MCF 10A (cell line): ENCODE measurements at regions of chr1 and their contacts with region 1.

Region 1: DNA sequence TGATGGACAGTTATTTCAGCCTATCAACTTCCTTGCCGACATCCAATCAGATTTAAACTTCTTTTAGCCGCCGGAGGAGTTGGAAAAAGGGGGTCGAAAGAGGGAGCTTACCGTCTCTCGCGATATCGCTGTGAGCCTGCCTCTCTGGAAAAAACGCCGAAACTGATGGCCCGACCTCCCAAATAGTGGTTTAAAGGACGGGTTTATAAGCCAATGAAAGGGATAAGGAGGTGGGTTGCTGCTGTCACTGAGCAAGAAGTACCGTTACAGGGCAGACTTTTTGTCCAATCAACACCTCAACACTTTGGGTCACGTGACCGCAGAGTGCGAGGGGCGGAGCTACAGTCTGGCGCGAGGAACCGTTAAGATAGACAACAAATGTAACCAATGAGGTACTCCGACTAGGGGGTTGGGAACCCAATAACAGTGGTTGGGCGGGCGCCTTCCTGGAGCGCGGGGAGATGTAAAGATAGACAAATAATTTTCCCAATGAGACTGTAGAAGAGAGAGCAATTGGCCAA is at the start of gene RBM15:
- DNase-seq: peak; percentile 100
- H3K4me3 Mint-ChIP-seq: no peak within 1 kb of the TSS
- H3K27ac Mint-ChIP-seq: no peak within 1 kb of the TSS
- H3K4me1 Mint-ChIP-seq: peaks cover 39% of the 10 kb centered on the region
- H3K27me3 Mint-ChIP-seq: no peaks in the 10 kb centered on the region
- CTCF ChIP-seq: no peak
- total RNA-seq, gene RBM15: 31.4 and 35.9 TPM in 2 replicates

Region 2: DNA sequence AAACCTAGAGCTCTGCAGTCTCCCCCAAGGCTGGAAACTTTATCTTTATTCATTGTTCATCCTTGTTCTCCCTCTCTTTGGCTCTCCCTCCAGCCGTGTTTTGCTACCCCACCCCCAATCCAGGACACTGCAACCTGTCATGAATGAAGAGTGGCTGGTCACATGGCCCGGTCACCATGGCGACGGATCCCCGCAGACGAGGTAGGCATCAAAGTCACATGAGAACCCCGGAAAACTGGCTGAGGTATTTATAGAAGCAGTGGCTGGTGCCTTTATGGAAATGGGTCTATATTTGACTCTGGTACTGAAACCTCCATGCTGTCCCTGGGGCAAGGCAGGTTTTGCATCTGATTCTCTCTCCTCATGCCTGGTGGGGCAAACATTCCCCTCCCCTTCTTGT is 202.0 kb before region 1 on chr1:
- CTCF ChIA-PET with region 1: no interaction called
- POLR2A ChIA-PET with region 1: no interaction called
- intact Hi-C with region 1: no loop called
- DNase-seq: no peak
- H3K4me3 Mint-ChIP-seq: no peak overlapping the region
- H3K27ac Mint-ChIP-seq: no peak overlapping the region
- H3K4me1 Mint-ChIP-seq: no peaks in the 10 kb centered on the region
- H3K27me3 Mint-ChIP-seq: peaks cover 74% of the 10 kb centered on the region
- CTCF ChIP-seq: no peak

Region 3: DNA sequence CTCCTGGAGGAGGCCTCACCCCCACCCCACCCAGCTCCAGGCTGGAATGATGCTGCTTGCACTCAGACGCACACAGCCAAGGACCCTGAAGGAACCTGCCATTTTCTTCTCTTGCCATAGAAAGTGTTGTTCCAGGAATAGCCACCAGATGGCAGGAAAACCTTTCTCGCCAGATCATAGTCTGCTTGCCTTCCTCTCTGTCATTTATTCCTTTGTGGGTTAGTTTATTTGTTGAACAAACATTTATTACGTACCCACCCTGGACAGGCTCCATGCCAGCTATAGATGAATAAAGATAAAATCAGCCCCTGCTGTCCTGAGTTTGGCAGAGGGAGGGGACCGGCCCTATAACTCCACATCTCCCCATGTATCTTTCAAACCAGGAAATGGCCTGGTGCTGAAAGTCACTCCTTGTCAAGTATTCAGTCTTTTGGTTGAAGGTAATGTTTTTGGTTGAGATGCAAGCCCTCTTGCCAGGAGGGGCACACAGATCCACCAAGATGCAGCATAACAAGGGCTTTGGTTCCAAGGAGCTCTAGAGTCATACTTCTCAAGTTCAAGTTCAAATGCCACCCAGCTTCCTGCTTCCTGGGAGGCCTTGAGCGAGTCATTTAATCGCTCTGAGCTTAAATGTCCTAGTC is 135.8 kb before region 1 on chr1:
- CTCF ChIA-PET with region 1: interaction called, 46 read pairs
- POLR2A ChIA-PET with region 1: interaction called, 10 read pairs
- intact Hi-C with region 1: no loop called
- DNase-seq: peak; percentile 71
- H3K4me3 Mint-ChIP-seq: no peak overlapping the region
- H3K27ac Mint-ChIP-seq: no peak overlapping the region
- H3K4me1 Mint-ChIP-seq: no peaks in the 10 kb centered on the region
- H3K27me3 Mint-ChIP-seq: no peaks in the 10 kb centered on the region
- CTCF ChIP-seq: peak; percentile 67

Region 4: GRCh38 chr1:110328274-110328673 is 10.7 kb before region 1 on chr1:
- CTCF ChIA-PET with region 1: interaction called, 8 read pairs
- POLR2A ChIA-PET with region 1: interaction called, 21 read pairs
- intact Hi-C with region 1: no loop called
- DNase-seq: no peak
- H3K4me3 Mint-ChIP-seq: no peak overlapping the region
- H3K27ac Mint-ChIP-seq: no peak overlapping the region
- H3K4me1 Mint-ChIP-seq: no peaks in the 10 kb centered on the region
- H3K27me3 Mint-ChIP-seq: no peaks in the 10 kb centered on the region
- CTCF ChIP-seq: no peak

Region 5: DNA sequence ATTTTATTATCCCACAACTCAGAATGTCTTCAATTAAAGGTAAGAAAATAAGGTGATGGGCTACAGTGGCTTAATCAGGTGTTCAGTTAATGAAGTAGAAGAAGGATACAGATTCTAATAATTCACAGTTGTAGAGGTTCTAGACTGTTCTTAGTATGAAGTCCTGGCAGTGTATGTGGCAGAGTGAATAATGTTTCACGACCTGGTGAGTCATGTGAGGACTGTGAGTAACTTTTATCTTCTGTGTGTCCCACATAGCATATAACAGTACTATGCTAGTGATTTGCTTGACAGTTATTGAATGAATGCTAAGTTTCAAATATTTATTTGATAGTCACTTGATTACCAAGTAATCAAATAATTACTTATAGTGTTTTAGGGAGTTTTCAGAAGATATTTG is 31.9 kb after region 1 on chr1:
- CTCF ChIA-PET with region 1: interaction called, 7 read pairs
- POLR2A ChIA-PET with region 1: interaction called, 21 read pairs
- intact Hi-C with region 1: no loop called
- DNase-seq: peak; percentile 54
- H3K4me3 Mint-ChIP-seq: no peak overlapping the region
- H3K27ac Mint-ChIP-seq: peak overlapping the region; percentile 40
- H3K4me1 Mint-ChIP-seq: peaks cover 11% of the 10 kb centered on the region
- H3K27me3 Mint-ChIP-seq: no peaks in the 10 kb centered on the region
- CTCF ChIP-seq: no peak

Region 6: DNA sequence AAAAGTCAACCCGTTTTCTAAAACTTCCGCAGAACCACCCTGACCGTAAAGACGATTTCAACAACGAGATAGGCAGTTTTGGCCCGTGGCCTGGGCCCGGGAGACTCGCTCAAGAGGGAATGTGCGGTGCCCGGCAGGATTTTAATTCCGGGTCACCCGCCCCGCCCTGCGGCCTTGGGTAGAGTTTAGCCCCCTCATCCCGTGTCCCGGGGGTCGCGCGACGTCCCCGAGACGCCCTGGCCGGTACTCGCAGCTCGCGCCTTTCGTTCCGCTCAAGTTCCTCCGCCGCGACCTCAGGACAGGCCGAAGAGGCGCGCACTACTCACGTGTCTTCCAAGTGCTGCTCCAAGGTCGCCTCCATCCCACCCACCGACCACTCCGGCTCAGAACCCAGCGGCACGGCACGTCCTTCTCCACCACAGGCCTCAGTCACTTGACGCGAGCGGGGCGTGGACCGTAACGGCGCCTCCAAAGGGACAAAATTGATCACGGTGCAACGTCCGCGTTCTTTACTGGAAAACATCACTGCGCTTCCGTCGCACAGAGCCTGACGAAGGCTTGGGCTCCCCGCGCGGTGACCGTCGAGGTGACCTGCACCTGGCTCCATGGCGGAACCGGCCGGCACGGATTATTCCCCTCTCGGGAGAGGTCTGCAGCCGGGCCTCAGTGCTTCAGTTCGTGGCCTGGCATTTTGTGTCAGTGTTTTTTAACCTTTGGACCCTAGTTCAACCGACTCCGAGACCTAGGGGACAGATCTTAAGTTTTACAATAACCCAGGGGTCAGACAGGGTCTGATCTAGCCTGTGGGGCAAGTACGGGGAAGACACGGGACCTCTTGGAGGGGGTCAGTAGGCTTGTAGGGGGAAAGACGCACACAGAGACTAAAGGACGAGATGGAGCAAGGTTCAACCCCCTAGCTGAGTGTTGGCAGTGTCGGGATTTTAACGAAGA is 68.6 kb after region 1 on chr1 and contains the start of gene LAMTOR5:
- CTCF ChIA-PET with region 1: interaction called, 7 read pairs
- POLR2A ChIA-PET with region 1: interaction called, 114 read pairs
- intact Hi-C with region 1: loop called (anchors 1 kb)
- DNase-seq: peak; percentile 90
- H3K4me3 Mint-ChIP-seq: peak within 1 kb of the TSS; percentile 100
- H3K27ac Mint-ChIP-seq: peak within 1 kb of the TSS; percentile 100
- H3K4me1 Mint-ChIP-seq: peaks cover 9% of the 10 kb centered on the region
- H3K27me3 Mint-ChIP-seq: no peaks in the 10 kb centered on the region
- CTCF ChIP-seq: no peak
- total RNA-seq, gene LAMTOR5: 111 and 127 TPM in 2 replicates

Region 7: DNA sequence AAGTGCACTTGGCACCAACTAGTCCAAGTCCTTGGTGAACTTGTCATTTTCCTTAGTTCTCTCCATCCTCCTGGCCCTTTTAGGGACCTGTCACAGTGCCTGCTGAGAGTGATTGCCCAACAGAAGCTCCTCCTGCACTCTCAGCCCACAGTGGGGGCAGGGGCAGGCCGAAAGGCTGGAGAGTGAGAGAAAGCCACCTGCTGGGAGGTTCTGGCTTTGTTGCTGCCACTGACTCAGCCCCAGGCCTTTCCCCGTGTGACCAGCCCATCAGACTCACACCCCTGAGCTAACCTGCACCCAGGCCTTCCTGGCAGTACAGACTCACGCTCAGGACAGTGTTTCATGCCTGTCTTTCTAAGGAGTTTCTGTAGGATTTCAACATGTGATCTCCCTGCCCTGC is 94.9 kb after region 1 on chr1:
- CTCF ChIA-PET with region 1: interaction called, 6 read pairs
- POLR2A ChIA-PET with region 1: interaction called, 20 read pairs
- intact Hi-C with region 1: no loop called
- DNase-seq: peak; percentile 86
- H3K4me3 Mint-ChIP-seq: no peak overlapping the region
- H3K27ac Mint-ChIP-seq: peak overlapping the region; percentile 80
- H3K4me1 Mint-ChIP-seq: peaks cover 15% of the 10 kb centered on the region
- H3K27me3 Mint-ChIP-seq: peaks cover 26% of the 10 kb centered on the region
- CTCF ChIP-seq: peak; percentile 30